Astrocyte of the cerebellum (primary cell): ENCODE measurements at regions of chr2 and their contacts with region 1.

Region 1: DNA sequence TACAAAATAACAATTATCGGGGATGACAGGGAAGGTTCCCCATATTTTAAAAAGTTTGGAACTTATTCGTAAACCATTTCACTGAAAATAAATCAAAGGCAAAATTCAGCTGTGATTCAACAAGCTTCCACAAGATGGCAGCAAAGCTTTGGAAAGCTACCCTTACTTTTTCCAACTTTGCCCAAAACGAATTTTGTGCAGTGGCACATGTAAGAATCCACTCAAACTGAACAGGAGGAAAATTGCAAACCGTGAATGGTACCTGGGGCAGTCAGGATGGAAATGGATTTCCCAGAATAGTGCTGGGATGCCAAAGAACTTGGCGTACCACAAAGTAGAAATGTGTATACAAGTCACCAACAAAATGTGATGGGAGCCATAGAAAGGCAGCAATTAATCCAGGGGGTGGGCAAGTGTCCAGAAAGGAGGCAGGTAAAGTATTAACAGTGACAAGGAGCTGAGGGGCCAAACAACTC is 10.7 kb downstream of the RPL31 start:
- DNase-seq: peak; percentile 16
- H3K4me3 ChIP-seq: no peak overlapping the region
- CTCF ChIP-seq: peak; percentile 72

Region 2: DNA sequence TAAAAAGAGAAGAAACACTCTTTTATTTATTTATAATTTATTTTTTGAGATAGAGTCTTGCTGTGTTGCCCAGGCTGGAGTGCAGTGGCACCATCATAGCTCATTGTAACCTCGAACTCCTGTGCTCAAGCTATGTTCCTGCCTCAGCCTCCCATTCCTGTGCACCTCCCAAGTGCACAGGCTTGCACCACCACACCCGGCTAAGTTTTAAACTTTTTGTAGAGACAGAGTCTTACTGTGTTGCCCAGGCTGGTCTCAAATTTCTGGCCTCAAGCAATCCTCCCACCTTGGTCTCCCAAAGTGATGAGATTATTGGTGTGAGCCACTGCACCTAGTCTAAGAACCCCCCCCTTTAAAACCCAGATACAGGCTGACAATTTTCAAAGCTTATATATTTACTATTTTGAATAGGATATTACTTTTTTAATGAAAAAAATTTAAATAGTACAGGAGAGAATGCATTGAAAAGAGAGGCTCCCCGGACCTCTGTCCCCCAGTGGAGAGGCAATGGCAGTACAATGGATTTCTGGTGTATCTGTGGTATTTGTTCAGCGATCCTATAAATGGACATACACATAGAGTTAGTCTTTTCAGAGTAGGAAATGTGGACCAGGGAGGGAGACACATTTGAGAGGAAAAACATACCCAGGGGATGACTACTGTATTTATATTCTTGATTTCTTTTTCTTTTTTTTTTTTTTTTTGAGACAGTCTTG is 191.8 kb after region 1 on chr2:
- in situ Hi-C with region 1: loop called (anchors 5 kb)
- DNase-seq: no peak
- H3K4me3 ChIP-seq: no peak overlapping the region
- CTCF ChIP-seq: peak; percentile 46